ENCODE measurements at regions of chr14 and their contacts with region 1.

Region 1: DNA sequence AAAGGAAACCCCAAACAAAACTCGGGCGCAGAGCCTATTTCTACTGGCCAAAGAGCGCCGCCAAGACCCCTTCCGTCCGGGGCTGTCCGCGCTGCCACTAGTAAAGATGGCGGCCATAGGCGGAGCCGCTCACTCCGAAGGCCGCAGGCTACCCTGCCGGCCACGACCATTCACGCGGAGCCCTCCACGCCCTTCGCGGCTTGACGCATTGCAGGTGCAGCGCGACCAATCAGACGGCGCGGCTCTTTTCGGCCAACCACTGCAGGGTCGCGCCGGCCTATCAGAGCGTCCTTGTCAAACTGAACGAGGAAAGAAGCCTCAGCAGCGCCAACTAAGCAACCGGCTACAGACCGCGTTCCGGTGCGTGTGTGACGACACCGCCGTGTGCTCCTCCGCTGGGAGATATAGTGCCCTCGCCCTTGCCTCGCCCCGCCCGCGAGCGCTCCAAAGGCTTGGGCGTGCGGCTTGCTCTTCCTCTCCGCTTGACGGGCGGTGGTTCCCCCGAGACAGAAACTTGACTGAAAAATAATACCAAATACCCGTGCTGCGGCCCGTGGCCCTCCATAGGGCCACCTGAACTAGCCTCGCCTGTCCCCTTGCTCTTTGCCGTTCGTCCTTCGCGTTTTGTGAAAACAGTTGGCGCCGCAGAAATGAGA is 13.6 kb upstream of the CALM1 start:
- DNase-seq: peak; percentile 99
- H3K4me3 Mint-ChIP-seq: no peak overlapping the region
- H3K27ac Mint-ChIP-seq: no peak overlapping the region
- H3K4me1 Mint-ChIP-seq: peaks cover 23% of the 10 kb centered on the region
- H3K27me3 Mint-ChIP-seq: no peaks in the 10 kb centered on the region

Region 2: DNA sequence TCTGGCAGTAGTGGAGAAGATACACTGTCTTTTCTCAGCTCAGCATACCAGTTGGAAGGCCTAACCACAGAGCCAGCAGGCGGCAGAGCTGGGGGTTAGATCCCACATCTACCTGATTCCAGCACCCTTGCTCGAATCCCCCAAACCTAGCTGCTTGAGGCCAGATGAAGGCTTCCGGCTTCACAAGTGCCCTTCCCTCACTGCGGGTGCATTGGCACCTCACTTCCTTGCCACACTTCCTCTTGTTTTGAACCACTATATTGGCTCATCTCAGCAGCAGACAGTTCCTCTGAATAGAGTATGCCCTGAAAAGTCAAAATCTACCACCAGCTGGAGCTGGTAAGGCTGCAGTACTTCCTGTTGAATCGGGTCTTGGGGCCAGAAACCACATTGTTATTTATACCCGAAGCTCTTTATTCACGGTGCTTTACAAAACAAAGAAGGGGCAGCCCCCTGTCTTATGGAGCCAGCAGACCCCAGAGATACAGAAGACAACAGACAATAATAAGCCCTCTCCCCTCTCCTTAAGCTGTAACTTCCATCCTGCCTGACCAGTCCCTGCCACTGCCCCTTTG is 662.4 kb before region 1 on chr14:
- CTCF ChIA-PET with region 1: no interaction called
- intact Hi-C with region 1: loop called (anchors 10 kb)
- DNase-seq: peak; percentile 76
- H3K4me3 Mint-ChIP-seq: peak overlapping the region; percentile 32
- H3K27ac Mint-ChIP-seq: peak overlapping the region; percentile 95
- H3K4me1 Mint-ChIP-seq: peaks cover 68% of the 10 kb centered on the region
- H3K27me3 Mint-ChIP-seq: no peaks in the 10 kb centered on the region

Region 3: DNA sequence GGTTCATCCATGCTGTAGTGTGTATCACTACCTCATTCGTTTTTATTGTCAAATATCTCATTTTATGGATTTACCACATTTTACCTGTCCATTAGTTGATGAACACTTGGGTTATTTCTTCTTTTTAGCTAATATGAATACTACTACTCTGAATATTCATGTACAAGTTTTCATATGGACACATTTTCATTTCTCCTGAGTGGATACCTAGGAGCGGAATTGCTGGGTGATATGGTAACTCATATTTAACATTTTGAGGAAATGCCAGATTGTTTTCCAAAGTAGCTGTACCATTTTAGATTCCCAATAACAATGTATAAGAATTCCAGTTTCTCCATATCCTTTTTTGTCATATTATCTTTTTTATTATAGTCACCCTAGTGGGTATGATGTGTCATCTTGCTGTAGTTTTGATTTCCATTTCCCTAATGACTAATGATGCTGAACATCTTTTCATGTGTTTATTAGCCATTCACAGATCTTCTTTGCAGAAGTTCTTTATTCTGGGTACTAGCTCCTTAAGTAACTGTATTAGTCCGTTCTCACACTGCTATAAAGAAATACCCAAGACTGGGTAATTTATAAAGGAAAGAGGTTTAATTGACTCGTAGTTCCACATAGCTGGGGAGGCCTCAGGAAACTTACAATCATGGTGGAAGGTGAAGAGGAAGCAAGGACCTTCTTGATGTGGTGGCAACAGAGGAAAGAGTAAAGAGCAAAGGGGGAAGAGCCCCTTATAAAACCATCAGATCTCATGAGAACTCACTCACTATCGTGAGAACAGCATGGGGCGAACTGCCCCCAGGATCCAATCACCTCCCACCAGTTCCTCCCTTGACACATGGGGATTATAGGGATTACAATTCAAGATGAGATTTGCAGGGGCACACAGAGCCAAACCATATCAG is 63.3 kb before region 1 on chr14:
- CTCF ChIA-PET with region 1: no interaction called
- intact Hi-C with region 1: loop called (anchors 1 kb)
- DNase-seq: no peak
- H3K4me3 Mint-ChIP-seq: no peak overlapping the region
- H3K27ac Mint-ChIP-seq: peak overlapping the region; percentile 87
- H3K4me1 Mint-ChIP-seq: peaks cover 34% of the 10 kb centered on the region
- H3K27me3 Mint-ChIP-seq: no peaks in the 10 kb centered on the region

Region 4: DNA sequence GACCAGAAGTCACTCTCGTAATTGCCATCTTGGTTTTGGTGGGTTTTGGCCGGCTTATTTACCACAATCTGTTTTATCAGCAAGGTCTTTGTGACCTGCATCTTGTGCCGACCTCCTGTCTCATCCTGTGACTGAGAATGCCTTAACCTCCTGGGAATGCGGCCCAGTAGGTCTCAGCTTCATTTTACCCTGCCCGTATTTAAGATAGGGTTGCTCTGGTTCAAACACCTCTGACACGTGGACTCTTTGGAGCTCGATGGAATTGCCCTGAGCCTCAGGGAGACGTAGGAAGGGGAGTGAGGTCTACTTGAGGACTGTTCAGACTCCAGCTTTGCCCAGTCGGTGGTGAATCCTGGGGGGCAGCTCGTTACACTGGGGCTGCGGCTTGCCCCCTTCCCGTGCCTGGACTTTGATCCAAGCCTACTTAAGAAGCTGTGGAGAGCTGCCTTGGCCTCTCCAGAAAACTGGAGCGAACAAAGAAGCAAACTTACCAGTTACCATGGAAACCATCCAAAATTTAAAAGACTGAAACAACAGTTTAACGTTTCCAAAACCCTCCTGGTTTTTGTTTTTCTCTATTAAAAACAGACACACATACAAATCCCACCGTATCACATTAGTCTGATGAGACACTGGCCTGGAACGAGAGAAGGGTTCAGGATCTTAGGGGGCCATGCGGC is 41.6 kb after region 1 on chr14:
- CTCF ChIA-PET with region 1: no interaction called
- intact Hi-C with region 1: no loop called
- DNase-seq: no peak
- H3K4me3 Mint-ChIP-seq: no peak overlapping the region
- H3K27ac Mint-ChIP-seq: no peak overlapping the region
- H3K4me1 Mint-ChIP-seq: no peaks in the 10 kb centered on the region
- H3K27me3 Mint-ChIP-seq: no peaks in the 10 kb centered on the region

Region 5: DNA sequence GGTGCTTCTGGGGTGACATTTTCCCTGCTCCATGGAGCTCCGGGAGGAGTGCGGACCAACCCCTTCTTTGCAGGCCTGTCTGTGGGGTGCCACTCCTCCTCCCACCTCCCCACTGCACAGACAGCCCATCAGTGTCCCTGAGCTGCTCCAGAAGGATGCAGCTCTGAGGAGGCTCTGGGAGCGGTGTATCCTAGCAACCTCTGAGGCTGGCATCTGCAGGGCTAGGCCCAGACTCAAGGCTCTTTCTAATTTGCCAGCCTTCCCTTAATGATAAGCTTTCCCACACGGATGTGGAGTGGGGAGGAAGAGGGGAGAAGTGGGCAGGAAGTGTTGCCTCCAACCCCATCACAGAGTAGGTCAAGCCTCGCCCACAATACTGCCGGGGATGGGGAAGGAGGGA is 73.3 kb after region 1 on chr14:
- CTCF ChIA-PET with region 1: no interaction called
- intact Hi-C with region 1: no loop called
- DNase-seq: no peak
- H3K4me3 Mint-ChIP-seq: no peak overlapping the region
- H3K27ac Mint-ChIP-seq: no peak overlapping the region
- H3K4me1 Mint-ChIP-seq: peaks cover 9% of the 10 kb centered on the region
- H3K27me3 Mint-ChIP-seq: no peaks in the 10 kb centered on the region

Region 6: DNA sequence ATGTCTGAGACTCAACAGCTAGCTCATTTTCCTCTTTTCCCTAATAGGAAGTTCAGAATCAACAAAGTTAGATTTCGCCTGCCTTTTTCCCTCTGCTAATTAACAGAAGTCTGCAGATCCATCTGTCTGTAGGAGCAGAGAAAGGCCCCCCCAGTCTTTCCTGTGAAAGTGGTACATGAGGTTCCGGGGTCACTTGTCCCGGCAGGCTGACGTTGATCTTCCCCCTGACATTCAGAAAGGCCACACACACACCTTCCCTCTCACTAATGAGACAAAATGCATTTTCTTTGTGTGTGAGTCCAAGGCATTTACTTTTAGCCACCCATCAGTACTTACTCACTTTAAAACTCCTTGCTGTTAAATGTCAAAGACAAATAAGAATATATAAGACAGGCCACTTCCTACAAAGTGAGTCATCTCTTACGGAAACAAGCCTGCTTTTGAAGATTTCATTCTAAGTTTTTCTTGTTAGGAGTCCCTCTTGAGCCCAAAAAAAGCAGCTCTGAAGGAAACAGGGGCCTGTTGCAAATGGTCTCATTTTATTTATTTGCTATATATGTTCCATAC is 294.4 kb after region 1 on chr14:
- CTCF ChIA-PET with region 1: no interaction called
- intact Hi-C with region 1: loop called (anchors 1 kb)
- DNase-seq: peak; percentile 37
- H3K4me3 Mint-ChIP-seq: peak overlapping the region; percentile 16
- H3K27ac Mint-ChIP-seq: peak overlapping the region; percentile 82
- H3K4me1 Mint-ChIP-seq: peaks cover 38% of the 10 kb centered on the region
- H3K27me3 Mint-ChIP-seq: no peaks in the 10 kb centered on the region

Region 7: GRCh38 chr14:90827916-90828610 is 444.9 kb after region 1 on chr14:
- CTCF ChIA-PET with region 1: no interaction called
- intact Hi-C with region 1: loop called (anchors 5 kb)
- DNase-seq: peak; percentile 96
- H3K4me3 Mint-ChIP-seq: peak overlapping the region; percentile 76
- H3K27ac Mint-ChIP-seq: peak overlapping the region; percentile 66
- H3K4me1 Mint-ChIP-seq: peaks cover 17% of the 10 kb centered on the region
- H3K27me3 Mint-ChIP-seq: no peaks in the 10 kb centered on the region

Region 8: DNA sequence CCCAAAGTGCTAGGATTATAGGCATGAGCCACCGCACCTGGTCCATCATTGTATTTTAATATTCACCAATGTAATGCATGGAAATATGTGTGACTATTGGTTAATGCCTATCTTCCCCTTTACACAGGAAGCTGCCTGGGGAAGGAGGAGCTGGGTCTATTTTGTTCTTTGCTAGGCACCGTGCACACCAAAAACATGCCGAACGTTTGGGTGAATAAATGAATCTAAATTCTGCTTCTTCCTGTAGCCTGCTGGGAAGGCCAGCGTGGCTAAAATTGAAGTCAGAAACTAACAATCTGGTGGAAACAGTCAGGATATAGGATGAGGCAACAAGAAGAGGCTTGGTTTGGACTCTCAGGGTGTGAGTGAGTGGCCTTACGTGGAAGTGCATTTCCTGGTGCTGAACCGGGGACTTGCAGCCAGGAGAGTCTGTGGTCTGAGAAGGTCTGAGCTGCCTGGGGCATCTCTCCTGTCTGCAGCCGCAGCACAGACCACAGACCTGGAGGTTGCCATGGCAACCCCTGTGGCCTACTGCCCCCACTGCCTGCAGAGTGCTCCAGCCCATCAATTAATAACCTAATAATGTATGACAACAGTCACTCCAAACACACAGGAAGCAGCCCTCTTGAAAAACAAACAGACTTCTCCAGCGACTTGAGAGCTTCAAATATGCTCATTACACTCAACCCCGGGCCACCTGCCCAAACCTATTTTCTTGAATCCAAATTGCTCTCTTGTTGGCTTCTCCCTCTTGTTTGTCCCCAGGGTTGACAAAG is 866.8 kb after region 1 on chr14:
- CTCF ChIA-PET with region 1: no interaction called
- intact Hi-C with region 1: loop called (anchors 5 kb)
- DNase-seq: peak; percentile 42
- H3K4me3 Mint-ChIP-seq: no peak overlapping the region
- H3K27ac Mint-ChIP-seq: peak overlapping the region; percentile 70
- H3K4me1 Mint-ChIP-seq: peaks cover 81% of the 10 kb centered on the region
- H3K27me3 Mint-ChIP-seq: no peaks in the 10 kb centered on the region

Measured in activated naive CD4-positive, alpha-beta T cell treated with anti-CD3 and anti-CD28 coated beads for 36 hours (primary cell).